Activated B cell treated with CpG ODN at 0.5 μM for 24 hours (primary cell): ENCODE measurements at regions of chr12 and their contacts with region 1.

Region 1: GRCh38 chr12:96219698-96220206 is 25.6 kb downstream of the ELK3 start:
- DNase-seq: no peak
- ATAC-seq: no peak
- H3K4me3 Mint-ChIP-seq: no peak overlapping the region
- H3K27ac Mint-ChIP-seq: no peak overlapping the region
- H3K4me1 Mint-ChIP-seq: peaks cover 30% of the 10 kb centered on the region
- H3K27me3 Mint-ChIP-seq: no peaks in the 10 kb centered on the region
- CTCF ChIP-seq: no peak

Region 2: GRCh38 chr12:95918194-95918993 is 301.4 kb before region 1 on chr12:
- CTCF ChIA-PET with region 1: interaction called, 17 read pairs
- POLR2A ChIA-PET with region 1: no interaction called
- intact Hi-C with region 1: loop called (anchors 1 kb)
- DNase-seq: no peak
- ATAC-seq: peak; percentile 82
- H3K4me3 Mint-ChIP-seq: no peak overlapping the region
- H3K27ac Mint-ChIP-seq: no peak overlapping the region
- H3K4me1 Mint-ChIP-seq: no peaks in the 10 kb centered on the region
- H3K27me3 Mint-ChIP-seq: peaks cover 6% of the 10 kb centered on the region
- CTCF ChIP-seq: peak; percentile 43

Region 3: DNA sequence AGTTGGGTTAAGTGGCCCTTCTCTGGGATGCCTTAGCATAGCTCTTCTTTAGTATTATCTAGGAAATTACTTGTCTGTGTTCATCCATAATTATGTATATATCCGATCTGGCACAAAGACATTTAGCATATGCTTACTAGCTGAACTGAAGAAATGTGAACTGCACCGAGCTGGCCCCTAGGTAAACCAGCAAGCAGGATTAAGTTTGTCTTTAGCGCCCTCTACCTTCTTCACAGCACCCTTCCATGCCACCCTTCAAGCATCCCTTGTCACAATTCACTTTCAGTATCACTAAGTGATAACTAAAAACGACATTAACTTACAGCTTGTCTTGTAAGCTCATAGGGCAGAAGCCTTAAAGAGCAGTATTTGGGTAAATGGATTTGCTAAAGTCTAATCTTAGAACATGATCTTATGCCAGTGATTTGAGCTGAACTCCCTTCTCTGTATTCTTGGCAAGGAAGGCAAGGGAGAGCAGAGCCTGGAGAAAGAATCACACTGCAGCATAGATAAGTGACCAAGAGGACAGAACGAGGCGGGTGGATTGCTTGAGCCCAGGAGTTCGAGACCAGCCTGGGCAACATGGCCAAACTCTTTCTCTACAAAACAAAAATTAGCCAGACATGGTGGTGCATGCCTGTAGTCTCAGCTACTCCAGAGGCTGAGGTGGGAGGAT is 221.0 kb before region 1 on chr12:
- CTCF ChIA-PET with region 1: interaction called, 12 read pairs
- POLR2A ChIA-PET with region 1: no interaction called
- intact Hi-C with region 1: no loop called
- DNase-seq: no peak
- ATAC-seq: peak; percentile 96
- H3K4me3 Mint-ChIP-seq: no peak overlapping the region
- H3K27ac Mint-ChIP-seq: peak overlapping the region; percentile 25
- H3K4me1 Mint-ChIP-seq: peaks cover 7% of the 10 kb centered on the region
- H3K27me3 Mint-ChIP-seq: no peaks in the 10 kb centered on the region
- CTCF ChIP-seq: peak; percentile 32

Region 4: DNA sequence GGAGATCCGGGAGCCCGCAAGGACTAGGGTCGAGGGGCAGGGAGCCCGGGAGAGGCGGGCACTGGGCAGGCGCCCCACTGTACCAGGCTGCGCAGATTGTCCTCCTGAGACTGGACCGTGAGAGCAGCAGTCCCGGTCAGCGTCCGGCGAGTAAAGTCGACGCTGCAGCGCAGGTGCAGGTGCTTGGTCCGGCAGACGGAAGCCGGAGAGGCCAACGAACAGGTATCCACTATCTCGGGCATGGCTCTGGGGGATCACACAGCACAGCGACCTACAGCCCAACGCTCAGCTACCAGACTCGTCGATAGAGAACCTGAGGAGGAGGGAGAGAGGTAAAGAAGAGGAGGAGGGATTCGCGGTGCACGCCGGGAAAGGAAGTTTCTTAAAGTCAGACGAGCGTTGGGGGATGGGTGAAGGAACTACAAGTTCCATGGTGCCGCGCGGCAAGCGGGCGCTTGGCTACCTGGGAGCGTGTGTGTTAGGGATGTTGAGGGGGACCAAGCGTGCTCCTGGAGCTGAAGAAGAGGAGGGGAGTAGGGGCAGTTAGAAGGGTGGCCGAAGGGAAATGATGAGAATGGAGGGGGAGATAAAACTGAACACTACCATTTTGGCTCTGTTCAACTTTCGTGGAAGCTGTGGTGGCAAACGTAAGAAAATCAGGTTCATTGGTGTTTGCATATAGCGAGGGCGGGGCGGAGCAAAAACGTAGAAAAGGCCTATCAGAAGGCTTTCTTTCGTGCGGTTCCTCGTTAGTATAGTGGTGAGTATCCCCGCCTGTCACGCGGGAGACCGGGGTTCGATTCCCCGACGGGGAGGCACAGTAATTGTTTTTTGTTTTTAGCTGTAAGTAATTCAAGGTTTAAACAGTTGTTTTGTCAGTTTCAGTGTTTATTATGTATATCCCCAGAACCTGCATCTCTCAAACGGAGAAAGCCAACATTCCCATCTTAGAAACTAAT is 184.2 kb before region 1 on chr12 and contains the start of gene LTA4H:
- CTCF ChIA-PET with region 1: interaction called, 6 read pairs
- POLR2A ChIA-PET with region 1: interaction called, 13 read pairs
- intact Hi-C with region 1: no loop called
- DNase-seq: peak; percentile 88
- ATAC-seq: peak; percentile 86
- H3K4me3 Mint-ChIP-seq: no peak within 1 kb of the TSS
- H3K27ac Mint-ChIP-seq: no peak within 1 kb of the TSS
- H3K4me1 Mint-ChIP-seq: peaks cover 26% of the 10 kb centered on the region
- H3K27me3 Mint-ChIP-seq: no peaks in the 10 kb centered on the region
- CTCF ChIP-seq: no peak
- total RNA-seq, gene LTA4H: 119 and 124 TPM in 2 replicates

Region 5: GRCh38 chr12:96073346-96074330 is 146.1 kb before region 1 on chr12:
- CTCF ChIA-PET with region 1: interaction called, 36 read pairs
- POLR2A ChIA-PET with region 1: interaction called, 3 read pairs
- intact Hi-C with region 1: no loop called
- DNase-seq: no peak
- ATAC-seq: no peak
- H3K4me3 Mint-ChIP-seq: no peak overlapping the region
- H3K27ac Mint-ChIP-seq: no peak overlapping the region
- H3K4me1 Mint-ChIP-seq: peaks cover 25% of the 10 kb centered on the region
- H3K27me3 Mint-ChIP-seq: peaks cover 1% of the 10 kb centered on the region
- CTCF ChIP-seq: no peak

Region 6: DNA sequence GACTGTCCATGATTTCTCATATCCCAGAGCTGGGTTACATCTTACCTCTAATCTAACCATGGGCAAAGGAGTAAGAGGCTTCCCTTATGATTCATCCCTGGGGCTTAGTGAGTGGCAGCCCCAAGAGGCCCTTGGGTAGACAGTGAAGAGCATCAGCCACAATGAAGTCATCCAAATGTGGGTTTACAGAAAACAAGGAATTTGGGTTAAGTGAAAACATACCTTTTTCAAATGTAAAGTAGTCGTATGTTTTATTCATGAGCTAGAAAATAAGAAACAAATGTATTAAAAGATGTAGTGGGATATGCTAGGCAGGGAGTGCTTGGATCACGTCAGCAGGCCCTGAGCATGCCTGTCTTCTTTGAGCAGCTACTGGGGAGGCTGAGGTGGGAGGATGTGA is 79.6 kb before region 1 on chr12:
- CTCF ChIA-PET with region 1: no interaction called
- POLR2A ChIA-PET with region 1: no interaction called
- intact Hi-C with region 1: loop called (anchors 1 kb)
- DNase-seq: no peak
- ATAC-seq: no peak
- H3K4me3 Mint-ChIP-seq: no peak overlapping the region
- H3K27ac Mint-ChIP-seq: no peak overlapping the region
- H3K4me1 Mint-ChIP-seq: peaks cover 28% of the 10 kb centered on the region
- H3K27me3 Mint-ChIP-seq: no peaks in the 10 kb centered on the region
- CTCF ChIP-seq: no peak

Region 7: DNA sequence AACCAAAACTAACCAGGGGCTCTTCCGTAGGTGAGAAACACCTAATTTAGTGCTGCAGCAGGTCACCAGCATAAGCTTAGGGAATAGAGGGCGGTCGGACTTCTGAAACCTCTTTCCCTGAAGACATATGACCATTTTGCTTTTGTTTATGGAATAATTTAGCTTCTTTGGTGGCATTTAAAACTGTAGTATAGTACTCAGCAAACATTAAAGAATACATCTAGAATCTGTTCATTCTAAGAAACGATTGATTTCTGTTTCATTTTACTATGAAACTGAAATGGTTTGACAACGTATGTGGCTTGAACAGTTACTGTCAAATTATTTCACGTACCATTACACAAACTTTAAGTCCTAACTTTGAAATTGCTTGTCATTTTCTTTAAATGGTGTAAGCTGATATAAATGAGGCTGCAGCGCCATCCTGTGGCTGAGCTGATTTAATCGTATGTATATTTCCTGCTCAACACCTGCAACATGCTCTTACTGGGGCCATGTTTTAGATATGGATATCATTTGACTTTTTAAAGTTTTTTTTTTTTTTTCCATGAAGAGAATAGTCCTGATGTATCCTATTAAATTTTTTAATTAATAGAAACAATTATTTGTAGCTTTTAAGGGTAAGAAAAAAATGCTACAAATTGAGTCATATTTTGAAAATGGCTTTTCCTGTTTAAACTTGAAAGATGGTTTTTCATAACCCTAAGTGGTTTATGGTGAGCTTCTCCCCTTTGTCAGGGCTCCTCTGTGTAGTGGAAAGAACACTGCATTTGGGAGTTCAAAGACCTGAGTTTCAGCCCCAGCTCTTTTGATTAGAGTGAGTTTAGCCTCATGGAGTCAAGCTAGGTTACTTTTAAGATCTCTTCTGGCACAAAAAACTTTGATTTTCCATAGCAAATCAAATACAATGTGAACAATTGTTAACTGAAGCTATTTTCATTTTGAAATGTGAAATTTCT is 297.0 kb after region 1 on chr12:
- CTCF ChIA-PET with region 1: interaction called, 77 read pairs
- POLR2A ChIA-PET with region 1: interaction called, 8 read pairs
- intact Hi-C with region 1: loop called (anchors 1 kb)
- DNase-seq: peak; percentile 59
- ATAC-seq: peak; percentile 54
- H3K4me3 Mint-ChIP-seq: no peak overlapping the region
- H3K27ac Mint-ChIP-seq: no peak overlapping the region
- H3K4me1 Mint-ChIP-seq: peaks cover 21% of the 10 kb centered on the region
- H3K27me3 Mint-ChIP-seq: no peaks in the 10 kb centered on the region
- CTCF ChIP-seq: no peak

Region 8: GRCh38 chr12:97757481-97758193 is 1537.9 kb after region 1 on chr12:
- CTCF ChIA-PET with region 1: no interaction called
- POLR2A ChIA-PET with region 1: no interaction called
- intact Hi-C with region 1: no loop called
- DNase-seq: no peak
- ATAC-seq: no peak
- H3K4me3 Mint-ChIP-seq: no peak overlapping the region
- H3K27ac Mint-ChIP-seq: no peak overlapping the region
- H3K4me1 Mint-ChIP-seq: no peaks in the 10 kb centered on the region
- H3K27me3 Mint-ChIP-seq: no peaks in the 10 kb centered on the region
- CTCF ChIP-seq: no peak